ENCODE measurements at regions of chr18 and their contacts with region 1.

Region 1: DNA sequence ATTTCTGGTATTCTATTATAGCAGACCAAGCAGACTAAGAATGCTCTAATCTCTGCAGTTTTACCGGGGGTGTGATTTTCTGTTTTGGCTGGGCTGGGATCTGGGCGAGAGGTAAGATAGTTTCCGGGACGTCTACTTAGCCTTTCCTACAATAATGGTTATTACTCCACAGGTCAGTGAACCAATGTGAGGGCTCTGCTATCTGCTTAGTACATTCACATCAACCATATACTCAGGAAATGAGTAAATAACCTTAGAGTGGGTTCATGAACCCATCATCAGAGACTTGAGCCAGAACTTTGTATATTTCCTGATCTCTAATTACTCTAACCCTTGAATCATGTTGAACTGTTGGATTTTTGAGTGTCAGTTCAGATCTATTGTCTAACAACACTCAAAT is 90.1 kb upstream of the NOL4 start:
- DNase-seq: no peak
- ATAC-seq: no peak
- H3K4me3 ChIP-seq: no peak overlapping the region
- H3K27ac ChIP-seq: no peak overlapping the region
- H3K4me1 ChIP-seq: no peaks in the 10 kb centered on the region
- H3K27me3 ChIP-seq: no peaks in the 10 kb centered on the region
- CTCF ChIP-seq: no peak
- POLR2A ChIP-seq: no peak

Region 2: GRCh38 chr18:34128436-34128835 is 186.4 kb before region 1 on chr18:
- intact Hi-C with region 1: loop called in 7 of 10 experiments (anchors 5 kb)
- DNase-seq: no peak
- ATAC-seq: no peak
- H3K4me3 ChIP-seq: no peak overlapping the region
- H3K27ac ChIP-seq: no peak overlapping the region
- H3K4me1 ChIP-seq: no peaks in the 10 kb centered on the region
- H3K27me3 ChIP-seq: no peaks in the 10 kb centered on the region
- CTCF ChIP-seq: no peak
- POLR2A ChIP-seq: no peak

Region 3: GRCh38 chr18:34370704-34371405 is 56.0 kb after region 1 on chr18:
- intact Hi-C with region 1: no loop called
- DNase-seq: no peak
- ATAC-seq: no peak
- H3K4me3 ChIP-seq: no peak overlapping the region
- H3K27ac ChIP-seq: no peak overlapping the region
- H3K4me1 ChIP-seq: no peaks in the 10 kb centered on the region
- H3K27me3 ChIP-seq: no peaks in the 10 kb centered on the region
- CTCF ChIP-seq: no peak
- POLR2A ChIP-seq: no peak

Region 4: DNA sequence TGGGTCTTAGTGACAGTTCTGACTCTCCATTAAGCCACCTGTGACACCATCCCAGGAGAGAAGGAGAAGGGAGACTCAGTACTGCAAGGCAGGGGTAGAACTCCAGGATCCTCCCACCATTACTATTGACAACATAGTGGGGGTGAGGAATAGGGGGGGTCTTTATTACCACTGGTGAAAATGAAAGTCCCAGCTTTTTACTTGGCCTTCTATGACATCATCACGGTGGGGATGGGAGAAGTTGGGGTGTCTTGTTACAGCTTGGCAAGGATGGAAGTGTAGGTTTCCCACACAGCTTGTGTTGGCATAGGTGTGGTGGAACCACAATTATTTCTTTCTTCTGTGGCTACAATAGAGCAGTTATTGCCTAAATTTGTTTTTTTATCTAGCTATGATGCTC is 191.4 kb after region 1 on chr18:
- intact Hi-C with region 1: no loop called
- DNase-seq: no peak
- ATAC-seq: no peak
- H3K4me3 ChIP-seq: no peak overlapping the region
- H3K27ac ChIP-seq: no peak overlapping the region
- H3K4me1 ChIP-seq: peaks cover 0 to 25% (median 8%) of the 10 kb centered on the region in 12 donors
- H3K27me3 ChIP-seq: no peaks in the 10 kb centered on the region
- CTCF ChIP-seq: no peak
- POLR2A ChIP-seq: no peak

Measured in heart left ventricle (tissue), 16 donors.